Heart left ventricle (tissue), 16 donors: ENCODE measurements at regions of chr19 and their contacts with region 1.

Region 1: DNA sequence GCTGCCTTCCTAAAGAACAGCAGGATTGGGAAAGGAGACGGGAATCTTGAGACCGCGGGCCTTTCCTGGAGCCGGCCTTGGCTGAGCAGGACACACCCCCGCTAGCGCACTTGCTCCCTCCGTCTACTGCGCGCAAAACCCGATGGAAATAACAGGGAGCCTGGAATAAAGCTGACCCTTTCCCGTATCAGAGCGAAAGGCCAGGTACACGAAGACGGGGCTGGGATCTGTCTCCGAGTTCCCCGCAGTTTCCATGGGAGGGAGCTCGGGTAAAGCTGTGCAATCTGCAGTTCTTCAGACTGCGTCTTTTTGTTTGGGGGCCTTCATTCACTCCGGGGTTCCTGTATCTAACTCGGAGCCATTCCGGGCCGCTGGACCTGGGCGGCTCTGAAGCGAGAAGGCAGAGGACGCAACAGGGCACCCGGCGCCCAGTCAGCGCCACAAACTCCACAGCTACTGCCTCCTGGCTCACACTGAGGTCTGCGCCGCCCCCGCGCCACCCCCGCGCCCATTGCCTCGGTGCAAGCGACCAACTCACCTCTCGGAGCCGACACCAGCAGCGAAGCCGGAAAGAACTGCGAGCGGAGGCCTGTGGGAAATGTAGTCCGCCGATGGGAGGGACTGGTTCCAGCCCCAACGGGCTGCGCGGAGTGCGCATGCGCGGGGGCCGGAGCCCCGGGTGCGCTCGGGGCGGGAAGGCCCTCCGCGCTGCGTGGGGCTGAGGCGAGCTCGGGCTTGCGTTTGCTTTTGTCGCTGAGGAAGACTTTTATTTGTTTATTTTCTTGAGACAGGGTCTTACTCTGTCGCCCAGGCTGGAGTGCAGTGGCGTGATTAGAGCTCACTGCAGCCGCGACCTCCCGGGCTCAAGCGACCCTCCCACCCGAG is at the start of gene ZFP14:
- DNase-seq: peak; percentile 94 to 97 (median 96)
- ATAC-seq: peak; percentile 96 to 99 (median 99)
- H3K4me3 ChIP-seq: peak within 1 kb of the TSS; percentile 32 to 98 (median 88)
- H3K27ac ChIP-seq: peak within 1 kb of the TSS; percentile 62 to 93 (median 86)
- H3K4me1 ChIP-seq: peaks cover 0 to 20% (median 11%) of the 10 kb centered on the region in 12 donors
- H3K27me3 ChIP-seq: no peaks in the 10 kb centered on the region
- CTCF ChIP-seq: peak in 6 of 12 donors; percentile 12 to 41 (median 20)
- POLR2A ChIP-seq: peak in 1 of 2 donors; percentile 93
- total RNA-seq, gene ZFP14: 1.3 to 5.1 (median 2.2) TPM

Region 2: DNA sequence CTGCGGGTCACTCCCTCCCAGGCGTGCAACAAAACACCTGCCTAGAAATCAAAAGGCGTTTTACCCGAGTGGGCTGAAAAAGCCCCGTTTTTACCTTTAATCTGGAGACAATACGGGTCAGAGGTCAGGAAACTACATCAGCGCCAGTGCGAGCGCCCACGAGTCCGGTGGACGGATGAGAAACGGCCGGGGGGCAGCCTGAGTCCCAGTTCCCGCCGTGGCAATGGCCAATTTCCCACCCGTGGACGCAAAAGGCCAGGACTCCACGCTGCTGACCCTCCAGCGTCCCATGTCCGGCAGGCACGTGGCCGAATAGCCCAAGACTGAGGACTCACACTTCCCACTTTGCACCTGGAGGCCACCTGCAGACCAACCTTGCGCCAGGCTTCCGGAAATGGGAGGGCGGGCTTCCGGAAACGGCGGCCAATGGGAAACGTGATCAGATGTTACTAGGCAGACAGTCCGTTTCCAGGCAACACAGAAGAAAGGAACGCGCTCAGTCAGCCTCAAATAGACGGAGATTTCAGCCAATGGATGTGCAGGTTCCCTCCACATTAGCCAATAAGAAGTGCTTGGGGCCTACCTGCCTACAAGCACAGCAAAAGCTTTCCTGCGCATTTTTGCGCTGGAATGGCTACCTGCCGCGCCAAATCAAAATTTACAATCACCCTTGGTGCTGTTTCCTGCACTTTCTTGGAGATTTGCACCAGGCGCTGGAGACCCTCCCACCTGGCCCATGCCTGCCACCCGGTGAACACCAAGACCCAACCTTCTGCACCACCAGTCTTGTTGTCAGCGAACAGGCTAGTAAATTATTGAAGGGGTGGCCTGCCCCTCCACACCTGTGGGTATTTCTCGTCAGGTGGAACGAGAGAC is 47.3 kb before region 1 on chr19:
- intact Hi-C with region 1: loop called in 1 of 10 experiments (anchors 2 kb)
- DNase-seq: peak; percentile 87 to 91 (median 88)
- ATAC-seq: peak; percentile 97 to 100 (median 99)
- H3K4me3 ChIP-seq: peak overlapping the region; percentile 65 to 95 (median 76)
- H3K27ac ChIP-seq: peak overlapping the region in 7 of 12 donors; percentile 15 to 65 (median 58)
- H3K4me1 ChIP-seq: peaks cover 0 to 15% (median 12%) of the 10 kb centered on the region in 12 donors
- H3K27me3 ChIP-seq: no peaks in the 10 kb centered on the region
- CTCF ChIP-seq: peak in 2 of 12 donors; percentile 9 to 11
- POLR2A ChIP-seq: peak in 1 of 2 donors; percentile 40

Region 3: GRCh38 chr19:36392916-36393673 is 14.2 kb after region 1 on chr19:
- intact Hi-C with region 1: no loop called
- DNase-seq: no peak
- ATAC-seq: no peak
- H3K4me3 ChIP-seq: no peak overlapping the region
- H3K27ac ChIP-seq: no peak overlapping the region
- H3K4me1 ChIP-seq: no peaks in the 10 kb centered on the region
- H3K27me3 ChIP-seq: no peaks in the 10 kb centered on the region
- CTCF ChIP-seq: no peak
- POLR2A ChIP-seq: no peak

Region 4: GRCh38 chr19:36418287-36419001 is 39.6 kb after region 1 on chr19 and contains the start of gene ZFP82:
- intact Hi-C with region 1: loop called in 3 of 10 experiments (anchors 5 kb)
- DNase-seq: peak; percentile 87 to 93 (median 89)
- ATAC-seq: peak; percentile 93 to 98 (median 98)
- H3K4me3 ChIP-seq: peak within 1 kb of the TSS; percentile 60 to 95 (median 76)
- H3K27ac ChIP-seq: peak within 1 kb of the TSS; percentile 80 to 96 (median 90)
- H3K4me1 ChIP-seq: peaks cover 5 to 24% (median 15%) of the 10 kb centered on the region in 12 donors
- H3K27me3 ChIP-seq: no peaks in the 10 kb centered on the region
- CTCF ChIP-seq: no peak
- POLR2A ChIP-seq: peak in 1 of 2 donors; percentile 82
- total RNA-seq, gene ZFP82: 3.4 to 5.3 (median 4.0) TPM